B cell (primary cell): ENCODE measurements at regions of chr19 and their contacts with region 1.

Region 1: DNA sequence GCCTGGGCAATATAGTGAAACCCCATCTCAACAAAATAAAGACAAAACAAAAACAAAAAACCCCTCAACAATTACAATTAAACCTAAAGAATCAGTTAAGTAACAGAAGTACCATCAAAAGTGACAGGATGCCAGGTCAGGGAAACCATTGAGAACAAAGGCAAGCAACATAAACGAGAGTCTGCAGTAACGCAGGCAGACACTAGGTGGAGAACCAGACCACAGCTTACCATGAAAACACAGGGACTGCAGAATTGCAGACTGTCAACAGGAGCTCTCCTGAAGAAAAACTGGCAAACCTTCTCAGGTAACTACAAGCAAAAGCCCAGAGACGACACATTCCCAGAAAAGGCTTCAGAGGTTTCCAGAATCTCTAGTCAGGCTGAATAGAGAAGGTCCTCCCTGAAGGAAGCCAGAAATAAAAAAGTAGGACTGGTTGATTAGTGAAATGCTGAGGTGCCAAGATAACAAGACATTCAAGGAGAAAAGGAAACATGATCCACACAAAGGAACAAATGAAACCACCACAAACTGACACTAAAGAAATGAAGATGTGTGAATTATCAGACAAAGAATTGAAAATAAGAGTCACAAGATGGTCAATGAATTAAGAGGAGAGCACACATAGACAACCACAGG is 2.2 kb upstream of the ZNF665 start:
- DNase-seq: peak; percentile 85
- ATAC-seq: peak; percentile 42
- H3K4me3 ChIP-seq: no peak overlapping the region
- H3K4me3 Mint-ChIP-seq: peak overlapping the region; percentile 72
- H3K27ac ChIP-seq: no peak overlapping the region
- H3K27ac Mint-ChIP-seq: peak overlapping the region; percentile 70
- H3K4me1 ChIP-seq: peaks cover 17 to 28% of the 10 kb centered on the region in 2 donors
- H3K4me1 Mint-ChIP-seq: peaks cover 46% of the 10 kb centered on the region
- H3K27me3 ChIP-seq: no peaks in the 10 kb centered on the region
- H3K27me3 Mint-ChIP-seq: no peaks in the 10 kb centered on the region
- CTCF ChIP-seq: peak; percentile 94

Region 2: DNA sequence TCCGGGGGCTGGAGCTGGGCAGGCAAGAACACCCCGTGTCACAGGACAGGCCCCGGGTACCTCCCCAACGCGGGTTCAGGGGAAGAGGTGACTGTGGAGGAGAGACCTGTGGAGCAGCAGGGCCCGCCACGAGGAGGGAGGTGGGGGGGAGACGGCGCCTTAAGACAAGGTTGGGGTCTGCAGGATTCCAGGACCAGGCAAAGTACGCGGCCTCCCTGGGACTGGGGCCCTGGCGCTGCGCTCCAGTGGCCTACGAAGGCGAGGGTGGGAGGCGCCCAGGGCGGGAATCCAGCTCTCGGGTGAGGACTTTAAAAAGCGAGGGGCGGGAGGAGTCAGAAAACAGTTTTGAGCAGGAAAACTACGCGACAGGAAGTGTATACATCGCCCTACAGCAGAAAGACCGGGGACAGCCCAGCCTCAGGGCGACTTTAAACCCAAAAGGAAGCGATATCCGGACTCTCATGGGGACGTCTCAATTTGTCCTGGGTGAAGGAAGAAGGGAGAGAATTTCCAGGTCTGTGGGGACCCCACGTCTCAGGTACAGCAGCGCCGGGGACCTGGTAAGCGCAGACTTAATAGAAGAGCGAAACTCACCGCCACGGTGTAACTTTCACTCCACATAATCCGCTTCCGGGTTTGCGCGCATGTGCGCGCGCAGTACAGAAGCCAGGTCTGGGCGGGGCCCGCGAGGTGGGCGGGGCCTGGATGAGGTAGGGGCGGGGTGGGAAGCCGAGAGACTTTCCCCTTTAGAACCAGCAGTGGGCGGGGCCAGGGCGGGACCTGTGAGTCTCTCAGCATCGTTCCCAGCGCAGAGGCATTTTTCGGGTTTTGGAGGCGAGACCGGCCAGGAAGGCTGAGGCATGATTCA is 557.4 kb before region 1 on chr19 and contains the start of gene ZNF83:
- CTCF ChIA-PET with region 1: no interaction called
- POLR2A ChIA-PET with region 1: no interaction called
- intact Hi-C with region 1: loop called (anchors 5 kb)
- DNase-seq: peak; percentile 97
- ATAC-seq: peak; percentile 96
- H3K4me3 ChIP-seq: peak within 1 kb of the TSS; percentile 72 to 95 (median 89)
- H3K4me3 Mint-ChIP-seq: peak within 1 kb of the TSS; percentile 94
- H3K27ac ChIP-seq: peak within 1 kb of the TSS; percentile 81 to 91
- H3K27ac Mint-ChIP-seq: peak within 1 kb of the TSS; percentile 95
- H3K4me1 ChIP-seq: peaks cover 9 to 18% of the 10 kb centered on the region in 2 donors
- H3K4me1 Mint-ChIP-seq: peaks cover 17% of the 10 kb centered on the region
- H3K27me3 ChIP-seq: no peaks in the 10 kb centered on the region
- H3K27me3 Mint-ChIP-seq: no peaks in the 10 kb centered on the region
- CTCF ChIP-seq: no peak
- total RNA-seq, gene ZNF83: 92.3 and 93.3 TPM in 2 replicates

Region 3: DNA sequence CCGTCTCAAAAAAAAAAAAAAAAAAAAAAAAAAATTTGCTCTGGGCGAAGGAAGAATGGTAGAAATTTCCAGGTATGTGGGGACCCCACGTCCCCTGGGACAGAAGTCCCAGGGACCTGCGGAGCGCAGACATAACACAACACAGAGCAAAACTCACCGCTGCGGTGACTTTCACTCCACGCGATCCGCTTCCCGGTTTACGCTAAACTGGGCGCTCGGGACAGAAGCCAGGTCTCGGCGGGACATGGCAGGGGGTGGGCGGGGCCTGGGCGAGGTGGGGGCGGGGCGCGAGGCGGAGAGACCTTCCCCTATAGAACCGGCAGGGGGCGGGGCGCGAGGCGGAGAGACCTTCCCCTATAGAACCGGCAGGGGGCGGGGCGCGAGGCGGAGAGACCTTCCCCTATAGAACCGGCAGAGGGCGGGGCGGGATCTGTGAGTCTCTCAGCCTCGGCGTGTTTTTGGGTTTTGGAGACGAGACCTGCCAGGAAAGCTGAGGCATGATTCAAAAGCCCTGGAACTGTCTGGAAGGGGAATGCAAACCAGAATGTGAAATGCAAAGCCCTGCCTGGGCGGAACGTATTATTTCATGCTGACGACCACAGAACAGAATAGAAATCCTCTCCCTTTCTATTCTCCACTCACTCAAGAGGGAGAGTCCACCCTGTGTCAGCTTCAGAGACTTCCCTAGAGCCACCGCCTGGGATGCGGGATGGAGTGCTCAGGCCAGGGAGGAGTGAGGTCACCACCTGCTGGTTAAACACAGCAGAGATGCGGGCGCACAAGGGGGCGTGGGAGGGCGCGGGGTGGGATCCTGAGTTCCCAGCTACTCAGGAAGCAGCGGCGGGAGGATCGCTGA is 201.8 kb before region 1 on chr19:
- CTCF ChIA-PET with region 1: no interaction called
- POLR2A ChIA-PET with region 1: no interaction called
- intact Hi-C with region 1: loop called (anchors 10 kb)
- DNase-seq: peak; percentile 73
- ATAC-seq: peak; percentile 99
- H3K4me3 ChIP-seq: peak overlapping the region in 4 of 5 experiments; percentile 33 to 64 (median 54)
- H3K4me3 Mint-ChIP-seq: peak overlapping the region; percentile 89
- H3K27ac ChIP-seq: no peak overlapping the region
- H3K27ac Mint-ChIP-seq: peak overlapping the region; percentile 61
- H3K4me1 ChIP-seq: peaks cover 8 to 14% of the 10 kb centered on the region in 2 donors
- H3K4me1 Mint-ChIP-seq: peaks cover 14% of the 10 kb centered on the region
- H3K27me3 ChIP-seq: peaks cover 0 to 10% (median 1%) of the 10 kb centered on the region in 4 experiments
- H3K27me3 Mint-ChIP-seq: peaks cover 12% of the 10 kb centered on the region
- CTCF ChIP-seq: peak; percentile 85

Region 4: DNA sequence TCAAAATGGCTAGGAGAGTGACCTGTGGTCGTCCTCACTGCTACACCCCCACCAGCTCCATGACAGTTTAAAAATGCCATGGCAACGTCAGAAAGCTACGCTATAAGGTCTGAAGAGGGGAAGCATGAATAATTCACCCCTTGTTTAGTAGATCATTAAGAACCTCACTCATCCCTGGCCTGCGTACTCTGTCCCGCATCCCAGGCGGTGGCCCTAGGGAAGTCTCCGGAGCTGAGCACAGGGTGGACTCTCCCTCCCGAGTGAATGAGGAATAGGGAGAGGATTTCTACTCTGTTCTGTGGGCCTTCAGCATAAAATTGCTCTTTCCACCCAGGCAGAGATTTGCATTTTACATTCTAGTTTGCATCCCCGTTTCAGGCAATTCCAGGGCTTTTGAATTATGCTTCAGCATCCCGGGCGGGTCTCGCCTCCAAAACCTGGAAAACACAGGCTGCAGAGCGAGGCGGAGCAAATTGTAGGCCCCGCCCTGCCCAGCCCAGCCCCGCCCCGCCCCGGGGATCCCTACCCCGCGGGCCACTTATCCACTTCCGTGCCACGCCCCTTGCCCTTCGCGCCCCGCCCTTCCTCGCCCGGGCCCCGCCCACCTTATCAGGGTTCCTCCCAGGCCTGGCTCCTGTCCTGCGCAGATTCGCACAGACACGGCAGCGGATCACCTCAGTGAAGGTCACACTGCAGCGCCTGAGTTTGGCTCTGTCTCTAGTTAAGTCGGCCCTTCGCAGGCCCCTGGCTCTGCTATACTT is 162.6 kb after region 1 on chr19:
- CTCF ChIA-PET with region 1: interaction called, 12 read pairs
- POLR2A ChIA-PET with region 1: no interaction called
- intact Hi-C with region 1: no loop called
- DNase-seq: no peak
- ATAC-seq: no peak
- H3K4me3 ChIP-seq: no peak overlapping the region
- H3K4me3 Mint-ChIP-seq: no peak overlapping the region
- H3K27ac ChIP-seq: no peak overlapping the region
- H3K27ac Mint-ChIP-seq: no peak overlapping the region
- H3K4me1 ChIP-seq: no peaks in the 10 kb centered on the region
- H3K4me1 Mint-ChIP-seq: no peaks in the 10 kb centered on the region
- H3K27me3 ChIP-seq: no peaks in the 10 kb centered on the region
- H3K27me3 Mint-ChIP-seq: no peaks in the 10 kb centered on the region
- CTCF ChIP-seq: no peak

Region 5: DNA sequence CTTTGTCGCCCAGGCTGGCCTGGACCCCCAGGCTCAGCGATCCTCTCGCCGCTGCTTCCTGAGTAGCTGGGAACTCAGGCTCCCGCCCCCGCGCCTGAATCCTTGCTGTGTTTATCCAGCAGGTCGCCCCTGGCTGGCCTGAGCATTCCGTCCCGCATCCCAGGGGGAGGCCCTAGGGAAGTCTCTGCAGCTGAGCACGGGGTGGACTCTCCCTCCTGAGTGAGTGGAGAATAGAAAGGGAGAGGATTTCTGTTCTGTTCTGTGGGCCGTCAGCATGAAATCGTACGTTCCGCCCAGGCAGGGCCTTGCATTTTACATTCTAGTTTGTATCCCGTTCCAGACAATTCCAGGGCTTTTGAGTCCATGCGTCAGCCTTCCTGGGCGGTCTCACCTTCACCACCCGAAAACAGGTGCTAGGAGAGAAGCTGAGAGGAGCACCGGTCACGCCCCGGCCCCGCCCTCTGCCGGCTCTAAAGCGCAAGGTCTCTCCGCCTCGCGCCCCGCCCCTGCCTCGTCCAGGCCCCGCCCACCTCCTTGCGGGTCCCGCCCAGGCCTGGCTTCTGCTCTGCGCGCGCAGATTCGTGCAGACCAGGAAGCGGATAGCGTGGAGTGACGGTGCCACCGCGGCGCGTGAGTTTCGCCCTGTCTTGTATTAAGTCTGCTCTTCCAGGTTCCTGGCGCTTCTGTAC is 236.2 kb after region 1 on chr19 and contains the start of gene ZNF761:
- CTCF ChIA-PET with region 1: interaction called, 3 read pairs
- POLR2A ChIA-PET with region 1: interaction called, 3 read pairs
- intact Hi-C with region 1: loop called (anchors 1 kb)
- DNase-seq: peak; percentile 97
- ATAC-seq: peak; percentile 98
- H3K4me3 ChIP-seq: peak within 1 kb of the TSS; percentile 60 to 83 (median 79)
- H3K4me3 Mint-ChIP-seq: peak within 1 kb of the TSS; percentile 95
- H3K27ac ChIP-seq: peak within 1 kb of the TSS; percentile 61 to 82
- H3K27ac Mint-ChIP-seq: peak within 1 kb of the TSS; percentile 89
- H3K4me1 ChIP-seq: peaks cover 10 to 13% of the 10 kb centered on the region in 2 donors
- H3K4me1 Mint-ChIP-seq: peaks cover 34% of the 10 kb centered on the region
- H3K27me3 ChIP-seq: no peaks in the 10 kb centered on the region
- H3K27me3 Mint-ChIP-seq: no peaks in the 10 kb centered on the region
- CTCF ChIP-seq: peak; percentile 39
- total RNA-seq, gene ZNF761: 14.9 and 18.9 TPM in 2 replicates

Region 6: DNA sequence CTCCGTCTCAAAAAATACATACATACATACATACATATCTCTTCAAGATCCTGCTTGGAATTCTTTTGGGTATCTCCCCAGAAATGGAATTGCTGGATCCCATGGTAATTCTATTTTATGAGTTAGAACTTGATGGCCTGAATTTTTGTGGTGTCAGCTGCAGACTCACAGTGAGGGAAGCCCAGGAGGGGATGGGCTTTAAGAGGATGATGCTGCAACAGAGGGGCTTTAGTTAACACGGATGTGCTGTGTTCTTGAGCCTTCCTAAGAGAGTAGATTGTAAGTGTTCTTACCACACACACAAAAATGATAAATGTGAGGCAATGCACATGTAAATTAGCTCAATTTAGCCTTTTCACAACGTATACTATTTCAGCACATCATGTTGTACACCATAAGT is 827.8 kb after region 1 on chr19:
- CTCF ChIA-PET with region 1: interaction called, 10 read pairs
- POLR2A ChIA-PET with region 1: no interaction called
- intact Hi-C with region 1: loop called (anchors 10 kb)
- DNase-seq: no peak
- ATAC-seq: no peak
- H3K4me3 ChIP-seq: no peak overlapping the region
- H3K4me3 Mint-ChIP-seq: no peak overlapping the region
- H3K27ac ChIP-seq: no peak overlapping the region
- H3K27ac Mint-ChIP-seq: no peak overlapping the region
- H3K4me1 ChIP-seq: peaks cover 0 to 5% of the 10 kb centered on the region in 2 donors
- H3K4me1 Mint-ChIP-seq: peaks cover 3% of the 10 kb centered on the region
- H3K27me3 ChIP-seq: peaks cover 0 to 10% (median 1%) of the 10 kb centered on the region in 4 experiments
- H3K27me3 Mint-ChIP-seq: peaks cover 21% of the 10 kb centered on the region
- CTCF ChIP-seq: no peak